Activated CD4-positive, alpha-beta T cell treated with anti-CD3 and anti-CD28 coated beads for 36 hours (primary cell): ENCODE measurements at regions of chr13 and their contacts with region 1.

Region 1: GRCh38 chr13:32515246-32515645 is 23.3 kb downstream of the N4BP2L2 start:
- DNase-seq: no peak
- ATAC-seq: no peak
- H3K4me3 Mint-ChIP-seq: no peak overlapping the region
- H3K27ac Mint-ChIP-seq: no peak overlapping the region
- H3K4me1 Mint-ChIP-seq: peaks cover 9% of the 10 kb centered on the region
- H3K27me3 Mint-ChIP-seq: no peaks in the 10 kb centered on the region

Region 2: GRCh38 chr13:32530841-32531253 is 15.6 kb after region 1 on chr13:
- CTCF ChIA-PET with region 1: interaction called, 6 read pairs
- POLR2A ChIA-PET with region 1: interaction called, 3 read pairs
- intact Hi-C with region 1: loop called in 1 of 2 experiments (anchors 1 kb)
- DNase-seq: no peak
- ATAC-seq: peak; percentile 62
- H3K4me3 Mint-ChIP-seq: peak overlapping the region; percentile 66
- H3K27ac Mint-ChIP-seq: peak overlapping the region; percentile 79
- H3K4me1 Mint-ChIP-seq: peaks cover 77% of the 10 kb centered on the region
- H3K27me3 Mint-ChIP-seq: no peaks in the 10 kb centered on the region

Region 3: GRCh38 chr13:32811297-32811800 is 296.1 kb after region 1 on chr13:
- CTCF ChIA-PET with region 1: no interaction called
- POLR2A ChIA-PET with region 1: no interaction called
- intact Hi-C with region 1: no loop called
- DNase-seq: peak; percentile 35
- ATAC-seq: peak; percentile 65
- H3K4me3 Mint-ChIP-seq: no peak overlapping the region
- H3K27ac Mint-ChIP-seq: no peak overlapping the region
- H3K4me1 Mint-ChIP-seq: peaks cover 8% of the 10 kb centered on the region
- H3K27me3 Mint-ChIP-seq: no peaks in the 10 kb centered on the region

Region 4: GRCh38 chr13:33454844-33455705 is 939.8 kb after region 1 on chr13:
- CTCF ChIA-PET with region 1: no interaction called
- POLR2A ChIA-PET with region 1: no interaction called
- intact Hi-C with region 1: no loop called
- DNase-seq: no peak
- ATAC-seq: no peak
- H3K4me3 Mint-ChIP-seq: no peak overlapping the region
- H3K27ac Mint-ChIP-seq: no peak overlapping the region
- H3K4me1 Mint-ChIP-seq: no peaks in the 10 kb centered on the region
- H3K27me3 Mint-ChIP-seq: no peaks in the 10 kb centered on the region